ENCODE measurements at regions of chr13 and their contacts with region 1.

Region 1: GRCh38 chr13:52127783-52128702 is 830 bp downstream of the NEK5 start:
- DNase-seq: peak; percentile 89
- H3K4me3 Mint-ChIP-seq: peak overlapping the region; percentile 89
- H3K27ac Mint-ChIP-seq: no peak overlapping the region
- H3K4me1 Mint-ChIP-seq: peaks cover 22% of the 10 kb centered on the region
- H3K27me3 Mint-ChIP-seq: peaks cover 16% of the 10 kb centered on the region

Region 2: DNA sequence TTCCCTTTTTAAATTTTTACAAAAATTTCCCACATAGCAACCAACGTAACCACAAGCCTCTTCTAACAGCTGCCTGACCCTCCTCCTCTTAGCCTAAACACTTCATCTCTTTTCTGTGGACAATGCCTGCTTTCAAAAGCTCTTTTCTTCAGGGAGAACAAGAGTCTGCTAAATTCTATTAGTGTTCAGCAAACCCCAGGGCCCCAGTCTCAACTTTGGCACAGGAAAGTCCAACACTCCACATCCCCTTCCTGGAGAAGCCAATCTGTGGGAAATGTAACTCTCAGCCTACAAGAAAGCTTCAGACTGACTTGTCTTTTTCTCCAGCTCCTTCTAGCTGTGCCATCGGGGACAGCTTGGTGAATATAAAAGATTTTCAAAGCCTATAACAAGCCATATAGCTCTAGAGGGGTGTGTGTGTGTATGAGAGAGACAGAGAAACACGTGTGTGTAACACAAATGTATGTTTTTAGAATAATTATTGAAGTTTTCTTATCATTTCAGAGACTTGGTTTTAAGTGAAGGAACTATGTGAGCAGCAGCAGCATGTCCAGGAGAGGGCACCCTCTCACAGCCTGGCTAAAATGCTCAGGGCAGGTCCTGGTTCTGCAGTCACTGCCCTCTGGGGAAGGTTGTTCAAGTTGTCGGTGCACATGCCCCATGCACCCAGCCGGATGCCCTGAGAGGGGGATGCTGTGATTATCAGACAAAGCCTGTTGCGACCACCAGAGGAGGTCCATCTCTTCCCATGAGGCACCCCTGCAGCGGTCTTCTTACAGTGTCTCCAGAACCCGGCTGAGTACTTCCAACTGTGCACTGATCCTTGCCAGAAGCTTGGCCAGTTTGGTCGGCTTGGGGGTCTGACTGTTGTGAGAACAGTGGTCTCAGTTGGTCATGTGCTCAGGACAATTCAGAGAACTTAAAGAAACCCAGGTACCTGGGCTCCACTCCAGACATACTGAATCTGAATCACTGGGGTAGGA is 231.8 kb before region 1 on chr13:
- intact Hi-C with region 1: loop called (anchors 1 kb)
- DNase-seq: peak; percentile 83
- H3K4me3 Mint-ChIP-seq: no peak overlapping the region
- H3K27ac Mint-ChIP-seq: no peak overlapping the region
- H3K4me1 Mint-ChIP-seq: no peaks in the 10 kb centered on the region
- H3K27me3 Mint-ChIP-seq: peaks cover 13% of the 10 kb centered on the region

Region 3: GRCh38 chr13:52001120-52001731 is 126.8 kb before region 1 on chr13:
- intact Hi-C with region 1: loop called (anchors 1 kb)
- DNase-seq: peak; percentile 62
- H3K4me3 Mint-ChIP-seq: no peak overlapping the region
- H3K27ac Mint-ChIP-seq: no peak overlapping the region
- H3K4me1 Mint-ChIP-seq: no peaks in the 10 kb centered on the region
- H3K27me3 Mint-ChIP-seq: peaks cover 18% of the 10 kb centered on the region

Region 4: DNA sequence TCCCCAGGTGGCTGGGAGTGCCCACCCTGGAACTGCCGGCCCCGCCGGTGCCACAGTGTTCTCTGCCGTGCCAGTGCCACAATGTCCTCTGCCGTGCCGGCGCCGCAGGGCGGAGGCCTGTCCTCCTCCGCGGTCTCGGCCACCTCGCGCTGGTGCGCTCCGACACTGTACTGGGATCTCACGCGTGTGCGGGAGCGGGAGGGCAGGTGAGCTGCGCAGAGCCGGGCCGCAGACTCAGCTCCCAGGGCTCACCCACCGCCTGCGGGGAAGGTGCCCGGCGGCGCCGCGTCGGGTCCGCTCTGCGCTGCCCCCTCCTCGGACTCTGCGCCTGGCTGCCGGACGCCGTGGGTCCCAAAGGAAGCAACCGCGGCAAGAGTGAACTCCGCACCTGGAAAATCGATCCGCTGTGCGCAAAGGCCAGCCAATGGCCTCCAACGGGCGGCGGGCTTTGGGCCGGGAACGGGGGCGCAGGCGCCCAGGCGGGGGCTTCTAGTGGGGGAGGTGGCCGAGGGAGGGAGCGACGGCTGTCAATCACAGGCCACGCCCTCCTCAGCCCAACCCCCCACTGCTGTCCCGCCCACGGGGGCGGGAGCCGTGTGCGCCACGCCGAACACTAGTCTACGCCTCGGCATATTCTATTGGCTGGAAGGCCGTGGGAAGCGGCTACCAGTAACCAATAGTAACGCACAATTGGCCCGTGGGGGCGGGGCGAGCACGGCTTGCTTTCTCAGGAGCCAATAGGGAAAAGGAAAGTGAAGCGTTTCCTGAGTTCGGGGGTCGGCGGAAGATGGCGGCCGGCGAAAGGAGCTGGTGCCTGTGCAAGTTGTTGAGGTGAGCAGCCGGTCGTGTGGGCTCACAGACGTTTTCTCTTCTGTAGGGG is 116.2 kb before region 1 on chr13 and contains the start of gene ALG11:
- intact Hi-C with region 1: loop called (anchors 1 kb)
- DNase-seq: peak; percentile 100
- H3K4me3 Mint-ChIP-seq: peak within 1 kb of the TSS; percentile 99
- H3K27ac Mint-ChIP-seq: peak within 1 kb of the TSS; percentile 93
- H3K4me1 Mint-ChIP-seq: peaks cover 8% of the 10 kb centered on the region
- H3K27me3 Mint-ChIP-seq: peaks cover 34% of the 10 kb centered on the region
- total RNA-seq, gene ALG11: 26.7 and 28.0 TPM in 2 replicates

Region 5: DNA sequence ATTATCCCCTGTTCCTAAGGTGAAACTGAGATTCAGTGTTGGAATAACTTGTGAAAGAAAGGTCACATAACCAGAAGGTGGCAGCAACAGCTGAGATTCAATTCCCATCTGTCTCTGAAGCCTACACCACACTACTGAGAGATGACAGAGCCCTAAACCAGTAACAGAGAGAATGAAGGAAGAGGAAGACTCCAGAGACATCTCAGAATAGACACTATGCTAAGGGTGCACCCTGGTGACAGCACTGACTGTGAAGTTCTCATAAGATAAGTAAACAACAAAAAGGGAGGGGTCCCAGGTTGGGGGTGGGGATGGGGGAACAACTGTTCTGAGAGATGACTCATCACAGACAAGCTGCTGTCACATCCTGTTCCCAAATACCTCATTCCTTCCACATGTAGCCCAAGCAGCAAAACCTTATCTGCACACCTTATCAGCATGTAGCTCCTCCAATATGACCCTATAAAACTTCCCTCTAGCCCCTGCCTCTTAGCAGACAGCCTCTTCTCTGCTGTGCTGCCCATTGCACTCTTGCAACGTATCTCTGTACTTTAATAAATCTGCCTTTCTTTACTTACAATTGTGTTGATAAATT is 57.0 kb before region 1 on chr13:
- intact Hi-C with region 1: loop called (anchors 2 kb)
- DNase-seq: peak; percentile 65
- H3K4me3 Mint-ChIP-seq: no peak overlapping the region
- H3K27ac Mint-ChIP-seq: no peak overlapping the region
- H3K4me1 Mint-ChIP-seq: peaks cover 12% of the 10 kb centered on the region
- H3K27me3 Mint-ChIP-seq: peaks cover 21% of the 10 kb centered on the region

Region 6: GRCh38 chr13:52159321-52160086 is 31.5 kb after region 1 on chr13 and contains the start of gene NEK3:
- intact Hi-C with region 1: loop called (anchors 1 kb)
- DNase-seq: peak; percentile 90
- H3K4me3 Mint-ChIP-seq: peak within 1 kb of the TSS; percentile 86
- H3K27ac Mint-ChIP-seq: peak within 1 kb of the TSS; percentile 81
- H3K4me1 Mint-ChIP-seq: peaks cover 41% of the 10 kb centered on the region
- H3K27me3 Mint-ChIP-seq: no peaks in the 10 kb centered on the region
- total RNA-seq, gene NEK3: 7.1 and 10.4 TPM in 2 replicates

Region 7: DNA sequence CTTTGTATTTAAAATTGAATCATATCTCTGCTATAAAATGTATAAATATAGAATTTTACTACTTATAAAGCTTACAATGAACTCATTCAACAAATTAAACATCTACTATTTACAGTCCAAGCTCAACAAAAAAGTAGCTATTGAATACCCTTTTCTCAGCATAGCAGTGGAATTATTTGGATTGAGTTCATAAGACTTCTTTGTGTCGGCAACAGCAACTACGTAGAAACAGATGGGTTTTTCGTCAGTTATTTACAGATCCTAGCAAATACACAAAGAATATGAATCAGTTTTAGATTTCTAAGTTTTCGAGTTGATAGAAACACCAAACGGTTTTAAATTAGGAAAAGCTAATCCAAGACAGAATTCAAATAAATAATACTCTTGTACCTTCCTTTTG is 41.8 kb after region 1 on chr13:
- intact Hi-C with region 1: no loop called
- DNase-seq: no peak
- H3K4me3 Mint-ChIP-seq: no peak overlapping the region
- H3K27ac Mint-ChIP-seq: no peak overlapping the region
- H3K4me1 Mint-ChIP-seq: peaks cover 7% of the 10 kb centered on the region
- H3K27me3 Mint-ChIP-seq: no peaks in the 10 kb centered on the region

Measured in activated CD4-positive, alpha-beta T cell treated with anti-CD3 and anti-CD28 coated beads, Interleukin-2, amount 10 ng/mL, durations not matched to agents 24 days and 14 days (primary cell).